K562 (cell line): ENCODE measurements at regions of chr6 and their contacts with region 1.

Region 1: GRCh38 chr6:57172136-57173055 is at the start of gene BAG2:
- DNase-seq: peak; percentile 89 to 98 (median 92)
- ATAC-seq: peak; percentile 87
- H3K4me3 ChIP-seq: peak within 1 kb of the TSS; percentile 91
- H3K27ac ChIP-seq: peak within 1 kb of the TSS; percentile 98
- H3K4me1 ChIP-seq: peaks cover 7 to 19% of the 10 kb centered on the region in 2 experiments; a peak in 3 of 5 replicates
- H3K27me3 ChIP-seq: no peaks in the 10 kb centered on the region
- CTCF ChIP-seq: peak in 2 of 3 experiments; percentile 1 to 28; a peak in 1 of 6 replicates
- EP300 ChIP-seq: peak; percentile 44
- POLR2A ChIP-seq: peak; percentile 96
- RAD21 ChIP-seq: peak in 1 of 2 experiments; percentile 19; a peak in 2 of 4 replicates
- polyA plus RNA-seq, gene BAG2: 12.8 to 14.0 TPM

Region 2: DNA sequence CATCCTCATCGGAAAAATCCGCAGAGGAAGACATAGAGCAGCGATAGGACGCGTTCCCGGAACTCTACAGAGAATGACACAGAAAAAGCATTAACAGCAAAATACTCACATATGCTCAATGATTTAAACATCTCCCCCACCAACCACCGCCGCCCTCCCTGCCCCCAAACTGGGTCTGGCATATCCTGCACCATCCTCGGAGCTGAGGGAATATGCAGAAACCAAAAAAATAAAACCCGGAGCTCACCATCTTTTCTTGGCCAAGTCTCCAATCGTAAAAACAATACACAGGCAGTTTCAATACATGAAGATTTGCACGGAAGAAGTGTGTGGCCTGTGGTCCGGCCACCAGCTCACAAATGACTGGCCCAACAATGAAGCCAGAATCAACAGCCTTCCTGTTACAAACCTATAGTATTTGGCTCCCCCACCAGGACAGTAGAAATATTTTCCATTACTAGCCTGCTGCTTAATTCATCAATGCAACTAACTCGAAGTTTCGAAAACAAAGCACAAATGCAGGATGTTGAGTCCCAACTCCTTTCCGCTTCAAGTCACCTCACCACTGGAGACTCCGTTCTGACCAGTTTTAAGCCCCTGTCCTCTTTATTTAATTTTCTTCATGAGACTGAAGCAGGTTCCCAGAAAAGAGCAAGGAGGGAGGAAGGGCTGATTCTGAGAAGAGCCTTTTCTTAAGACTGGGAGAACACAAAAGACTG is 320.7 kb before region 1 on chr6:
- CTCF ChIA-PET with region 1: no interaction called
- POLR2A ChIA-PET with region 1: no interaction called
- in situ Hi-C with region 1: no loop called
- intact Hi-C with region 1: no loop called
- DNase-seq: peak in 2 of 4 experiments; percentile 40 to 55
- ATAC-seq: peak; percentile 92
- H3K4me3 ChIP-seq: no peak overlapping the region
- H3K27ac ChIP-seq: no peak overlapping the region
- H3K4me1 ChIP-seq: no peaks in the 10 kb centered on the region; a peak in 1 of 5 replicates
- H3K27me3 ChIP-seq: no peaks in the 10 kb centered on the region
- CTCF ChIP-seq: peak; percentile 47 to 70 (median 59); a peak in 5 of 6 replicates
- EP300 ChIP-seq: no peak
- POLR2A ChIP-seq: no peak
- RAD21 ChIP-seq: peak; percentile 60 to 73

Region 3: GRCh38 chr6:56902641-56903464 is 269.5 kb before region 1 on chr6:
- CTCF ChIA-PET with region 1: no interaction called
- POLR2A ChIA-PET with region 1: interaction called, 4 read pairs
- in situ Hi-C with region 1: no loop called
- intact Hi-C with region 1: loop called (anchors 5 kb)
- DNase-seq: peak; percentile 24 to 47 (median 35)
- ATAC-seq: peak; percentile 70
- H3K4me3 ChIP-seq: no peak overlapping the region
- H3K27ac ChIP-seq: no peak overlapping the region
- H3K4me1 ChIP-seq: peaks cover 0 to 4% of the 10 kb centered on the region in 2 experiments; a peak in 2 of 5 replicates
- H3K27me3 ChIP-seq: no peaks in the 10 kb centered on the region
- CTCF ChIP-seq: peak in 2 of 3 experiments; percentile 53 to 81; a peak in 4 of 6 replicates
- EP300 ChIP-seq: no peak
- POLR2A ChIP-seq: no peak
- RAD21 ChIP-seq: peak; percentile 56 to 73

Region 4: GRCh38 chr6:56955171-56956045 is 217.0 kb before region 1 on chr6:
- CTCF ChIA-PET with region 1: no interaction called
- POLR2A ChIA-PET with region 1: interaction called, 6 read pairs
- in situ Hi-C with region 1: no loop called
- intact Hi-C with region 1: loop called (anchors 2 kb)
- DNase-seq: peak; percentile 86 to 95 (median 87)
- ATAC-seq: peak; percentile 90
- H3K4me3 ChIP-seq: peak overlapping the region; percentile 69
- H3K27ac ChIP-seq: peak overlapping the region; percentile 72
- H3K4me1 ChIP-seq: peaks cover 13 to 20% of the 10 kb centered on the region in 2 experiments; a peak in 4 of 5 replicates
- H3K27me3 ChIP-seq: no peaks in the 10 kb centered on the region
- CTCF ChIP-seq: peak; percentile 87 to 96 (median 96)
- EP300 ChIP-seq: no peak; the same call in 1 of the 2 replicates
- POLR2A ChIP-seq: peak; percentile 51; the same call in 1 of the 2 replicates
- RAD21 ChIP-seq: peak; percentile 80 to 82

Region 5: GRCh38 chr6:57002197-57002596 is 170.2 kb before region 1 on chr6:
- CTCF ChIA-PET with region 1: no interaction called
- POLR2A ChIA-PET with region 1: no interaction called
- in situ Hi-C with region 1: no loop called
- intact Hi-C with region 1: no loop called
- DNase-seq: no peak
- ATAC-seq: no peak
- H3K4me3 ChIP-seq: no peak overlapping the region
- H3K27ac ChIP-seq: no peak overlapping the region
- H3K4me1 ChIP-seq: no peaks in the 10 kb centered on the region
- H3K27me3 ChIP-seq: 0 out of 5 replicates have a peak, but pooled peaks cover 0 to 4% of the 10 kb centered on the region in 2 experiments
- CTCF ChIP-seq: no peak
- EP300 ChIP-seq: no peak
- POLR2A ChIP-seq: no peak
- RAD21 ChIP-seq: no peak

Region 6: DNA sequence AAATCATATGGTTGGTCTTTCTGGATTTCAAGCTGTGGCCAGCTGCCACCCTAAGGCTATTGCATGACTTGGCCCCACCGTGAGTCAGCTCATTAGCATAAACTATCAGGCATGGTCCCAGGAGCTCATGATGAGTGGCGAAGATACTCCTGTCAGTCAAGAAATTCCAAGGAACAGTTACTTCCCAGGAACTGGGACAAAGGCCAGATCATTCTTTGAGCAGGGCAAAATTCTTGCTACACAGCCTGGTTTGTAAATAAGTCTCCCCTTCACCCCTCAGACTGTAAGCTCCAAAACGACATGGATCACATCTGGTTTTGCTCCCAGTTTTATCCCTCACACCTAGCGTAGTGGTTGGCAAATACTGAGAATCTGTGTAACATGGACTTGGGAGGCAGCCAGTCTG is 158.9 kb before region 1 on chr6:
- CTCF ChIA-PET with region 1: no interaction called
- POLR2A ChIA-PET with region 1: no interaction called
- in situ Hi-C with region 1: no loop called
- intact Hi-C with region 1: loop called (anchors 5 kb)
- DNase-seq: peak in 3 of 4 experiments; percentile 19 to 54 (median 38)
- ATAC-seq: peak; percentile 83
- H3K4me3 ChIP-seq: no peak overlapping the region
- H3K27ac ChIP-seq: no peak overlapping the region
- H3K4me1 ChIP-seq: peaks cover 0 to 11% of the 10 kb centered on the region in 2 experiments; a peak in 3 of 5 replicates
- H3K27me3 ChIP-seq: no peaks in the 10 kb centered on the region
- CTCF ChIP-seq: no peak
- EP300 ChIP-seq: no peak
- POLR2A ChIP-seq: no peak
- RAD21 ChIP-seq: peak in 1 of 2 experiments; percentile 8; a peak in 1 of 4 replicates

Region 7: GRCh38 chr6:57048577-57048976 is 123.8 kb before region 1 on chr6:
- CTCF ChIA-PET with region 1: no interaction called
- POLR2A ChIA-PET with region 1: no interaction called
- in situ Hi-C with region 1: no loop called
- intact Hi-C with region 1: loop called (anchors 5 kb)
- DNase-seq: peak in 1 of 4 experiments; percentile 34
- ATAC-seq: no peak
- H3K4me3 ChIP-seq: peak overlapping the region; percentile 44
- H3K27ac ChIP-seq: peak overlapping the region; percentile 71
- H3K4me1 ChIP-seq: peaks cover 6 to 10% of the 10 kb centered on the region in 2 experiments; a peak in 4 of 5 replicates
- H3K27me3 ChIP-seq: no peaks in the 10 kb centered on the region
- CTCF ChIP-seq: no peak
- EP300 ChIP-seq: no peak
- POLR2A ChIP-seq: no peak
- RAD21 ChIP-seq: no peak

Region 8: DNA sequence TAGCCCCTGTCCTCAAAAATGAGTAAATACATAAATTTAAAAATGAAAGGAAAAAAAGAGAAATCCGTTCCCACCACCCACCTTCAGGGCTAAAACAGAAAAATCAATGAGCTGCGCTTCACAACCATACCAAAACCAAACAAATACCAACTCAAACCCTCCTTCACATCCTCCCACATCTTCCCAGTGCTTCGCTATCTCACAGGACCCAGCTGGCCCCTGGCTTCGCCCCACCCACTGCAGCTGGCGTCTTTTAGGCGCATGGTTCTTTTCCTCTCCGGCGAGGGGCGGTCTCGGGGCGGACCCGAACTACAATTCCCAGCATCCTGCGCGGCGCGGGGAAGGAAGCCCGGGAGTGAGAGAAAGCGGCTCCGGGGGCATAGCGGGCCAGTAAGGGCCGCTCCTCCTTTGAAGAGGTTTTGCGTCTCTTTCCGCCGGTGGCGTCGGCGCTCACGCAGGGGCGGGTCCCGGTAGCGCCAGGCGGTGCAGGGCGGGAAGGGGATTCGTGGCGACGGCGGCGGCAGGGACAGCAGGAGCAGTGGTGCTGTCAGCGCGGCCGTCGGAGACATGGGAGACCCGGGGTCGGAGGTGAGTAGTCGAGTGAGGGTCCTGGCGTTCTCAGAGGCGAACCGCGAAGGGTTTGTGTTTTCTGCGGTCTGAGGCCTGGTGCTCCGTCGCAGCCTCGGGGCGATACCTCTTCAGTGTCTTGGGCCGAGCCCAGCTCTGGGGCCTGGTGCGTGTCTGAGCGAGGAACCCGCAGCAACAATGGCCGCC is 82.5 kb before region 1 on chr6 and contains the start of gene ZNF451:
- CTCF ChIA-PET with region 1: no interaction called
- POLR2A ChIA-PET with region 1: interaction called, 4 read pairs
- in situ Hi-C with region 1: no loop called
- intact Hi-C with region 1: loop called (anchors 5 kb)
- DNase-seq: peak; percentile 92 to 99 (median 95)
- ATAC-seq: peak; percentile 88
- H3K4me3 ChIP-seq: peak within 1 kb of the TSS; percentile 52
- H3K27ac ChIP-seq: peak within 1 kb of the TSS; percentile 85
- H3K4me1 ChIP-seq: peaks cover 9 to 25% of the 10 kb centered on the region in 2 experiments
- H3K27me3 ChIP-seq: no peaks in the 10 kb centered on the region
- CTCF ChIP-seq: peak in 1 of 3 experiments; percentile 8; a peak in 1 of 6 replicates
- EP300 ChIP-seq: peak; percentile 86
- POLR2A ChIP-seq: peak; percentile 93
- RAD21 ChIP-seq: no peak
- polyA plus RNA-seq, gene ZNF451: 16.1 to 17.3 TPM

Region 9: DNA sequence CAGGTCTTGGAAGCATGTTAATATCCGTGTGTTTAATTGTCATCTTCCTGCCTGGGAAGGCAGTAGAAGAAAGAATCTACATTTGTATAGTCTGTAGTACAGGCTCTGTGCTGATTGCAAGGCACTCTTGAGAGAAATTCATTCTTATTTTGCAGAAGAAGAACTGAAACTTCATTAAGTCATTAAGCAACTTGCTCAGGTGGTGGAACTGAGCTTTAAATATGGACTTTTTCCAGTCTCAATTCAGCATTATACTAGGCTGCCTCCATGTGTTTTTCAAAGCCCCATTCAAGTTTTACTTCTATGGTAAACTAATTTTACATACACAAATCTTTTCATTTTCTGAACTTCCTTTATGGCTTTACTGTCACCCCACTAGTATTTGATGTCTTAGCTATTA is 63.7 kb before region 1 on chr6:
- CTCF ChIA-PET with region 1: no interaction called
- POLR2A ChIA-PET with region 1: no interaction called
- in situ Hi-C with region 1: no loop called
- intact Hi-C with region 1: no loop called
- DNase-seq: no peak
- ATAC-seq: no peak
- H3K4me3 ChIP-seq: no peak overlapping the region
- H3K27ac ChIP-seq: no peak overlapping the region
- H3K4me1 ChIP-seq: no peaks in the 10 kb centered on the region; a peak in 1 of 5 replicates
- H3K27me3 ChIP-seq: no peaks in the 10 kb centered on the region
- CTCF ChIP-seq: no peak
- EP300 ChIP-seq: no peak
- POLR2A ChIP-seq: no peak
- RAD21 ChIP-seq: no peak

Region 10: GRCh38 chr6:57221936-57222742 is 49.7 kb after region 1 on chr6 and contains the start of gene RAB23:
- CTCF ChIA-PET with region 1: no interaction called
- POLR2A ChIA-PET with region 1: interaction called, 3 read pairs
- in situ Hi-C with region 1: no loop called
- intact Hi-C with region 1: loop called (anchors 2 kb)
- DNase-seq: peak; percentile 91 to 96 (median 95)
- ATAC-seq: peak; percentile 74
- H3K4me3 ChIP-seq: peak within 1 kb of the TSS; percentile 89
- H3K27ac ChIP-seq: peak within 1 kb of the TSS; percentile 84
- H3K4me1 ChIP-seq: peaks cover 4 to 13% of the 10 kb centered on the region in 2 experiments
- H3K27me3 ChIP-seq: no peaks in the 10 kb centered on the region
- CTCF ChIP-seq: no peak
- EP300 ChIP-seq: no peak
- POLR2A ChIP-seq: peak; percentile 83
- RAD21 ChIP-seq: no peak
- polyA plus RNA-seq, gene RAB23: 3.4 to 3.6 TPM